Naive thymus-derived CD4-positive, alpha-beta T cell (primary cell): ENCODE measurements at regions of chr5 and their contacts with region 1.

Region 1: DNA sequence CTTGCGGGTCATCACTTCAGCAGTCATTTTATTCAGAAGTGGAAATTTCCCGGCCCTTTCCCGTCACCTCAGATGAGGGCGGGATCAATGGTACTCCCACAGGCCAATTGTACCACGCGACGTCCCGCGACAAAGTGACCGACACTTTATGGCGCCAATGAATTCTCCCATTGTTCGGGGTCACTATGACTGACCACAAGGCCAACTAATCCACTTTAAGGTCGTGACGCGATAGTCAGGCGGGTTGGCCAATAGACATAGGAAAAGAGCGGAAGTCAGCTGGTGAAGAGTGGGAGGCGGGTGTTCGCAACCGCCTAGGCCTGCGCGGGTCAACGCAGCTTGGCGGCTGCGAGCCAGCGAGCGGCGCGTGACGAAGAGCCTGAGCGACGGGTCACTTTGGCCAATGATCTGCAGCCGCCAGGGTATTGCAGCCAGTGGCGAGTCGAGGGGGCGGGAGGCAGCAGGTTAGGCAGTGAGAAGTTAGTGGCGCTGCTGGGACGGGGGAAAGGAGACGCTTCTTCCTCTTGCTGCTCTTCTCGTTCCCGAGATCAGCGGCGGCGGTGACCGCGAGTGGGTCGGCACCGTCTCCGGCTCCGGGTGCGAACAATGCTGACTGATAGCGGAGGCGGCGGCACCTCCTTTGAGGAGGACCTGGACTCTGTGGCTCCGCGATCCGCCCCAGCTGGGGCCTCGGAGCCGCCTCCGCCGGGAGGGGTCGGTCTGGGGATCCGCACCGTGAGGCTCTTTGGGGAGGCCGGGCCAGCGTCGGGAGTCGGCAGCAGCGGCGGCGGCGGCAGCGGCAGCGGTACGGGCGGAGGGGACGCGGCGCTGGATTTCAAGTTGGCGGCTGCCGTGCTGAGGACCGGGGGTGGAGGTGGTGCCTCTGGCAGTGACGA is at the start of gene ANKHD1:
- DNase-seq: peak; percentile 89 to 99 (median 98)
- ATAC-seq: peak; percentile 88
- H3K4me3 ChIP-seq: peak within 1 kb of the TSS; percentile 87
- H3K4me3 Mint-ChIP-seq: peak within 1 kb of the TSS in 1 of 10 donors; percentile 86
- H3K27ac ChIP-seq: peak within 1 kb of the TSS; percentile 90
- H3K27ac Mint-ChIP-seq: peak within 1 kb of the TSS in 2 of 9 donors; percentile 90 to 91
- H3K4me1 ChIP-seq: peaks cover 11 to 30% of the 10 kb centered on the region in 2 donors
- H3K4me1 Mint-ChIP-seq: peaks cover 23 to 45% (median 38%) of the 10 kb centered on the region in 7 donors
- H3K27me3 ChIP-seq: no peaks in the 10 kb centered on the region
- H3K27me3 Mint-ChIP-seq: no peaks in the 10 kb centered on the region
- total RNA-seq, gene ANKHD1: 145 to 240 (median 217) TPM

Region 2: GRCh38 chr5:138542956-138543729 is 1858.5 kb before region 1 on chr5 and contains the start of gene ETF1:
- CTCF ChIA-PET with region 1: no interaction called
- POLR2A ChIA-PET with region 1: no interaction called
- intact Hi-C with region 1: loop called (anchors 1 to 10 kb)
- DNase-seq: peak; percentile 95 to 100 (median 100)
- ATAC-seq: peak; percentile 95
- H3K4me3 ChIP-seq: peak within 1 kb of the TSS; percentile 87
- H3K4me3 Mint-ChIP-seq: peak within 1 kb of the TSS; percentile 94 to 100 (median 99)
- H3K27ac ChIP-seq: peak within 1 kb of the TSS; percentile 94
- H3K27ac Mint-ChIP-seq: peak within 1 kb of the TSS; percentile 97 to 100 (median 100)
- H3K4me1 ChIP-seq: peaks cover 36 to 41% of the 10 kb centered on the region in 2 donors
- H3K4me1 Mint-ChIP-seq: peaks cover 55 to 91% (median 73%) of the 10 kb centered on the region in 7 donors
- H3K27me3 ChIP-seq: no peaks in the 10 kb centered on the region
- H3K27me3 Mint-ChIP-seq: no peaks in the 10 kb centered on the region
- total RNA-seq, gene ETF1: 40.6 to 137 (median 84.1) TPM

Region 3: GRCh38 chr5:140107312-140108083 is 294.1 kb before region 1 on chr5:
- CTCF ChIA-PET with region 1: no interaction called
- POLR2A ChIA-PET with region 1: no interaction called
- intact Hi-C with region 1: loop called (anchors 1 kb)
- DNase-seq: peak; percentile 87 to 96 (median 94)
- ATAC-seq: peak; percentile 92
- H3K4me3 ChIP-seq: peak overlapping the region; percentile 80
- H3K4me3 Mint-ChIP-seq: peak overlapping the region; percentile 93 to 99 (median 97)
- H3K27ac ChIP-seq: peak overlapping the region; percentile 91
- H3K27ac Mint-ChIP-seq: peak overlapping the region; percentile 96 to 99 (median 99)
- H3K4me1 ChIP-seq: peaks cover 19 to 35% of the 10 kb centered on the region in 2 donors
- H3K4me1 Mint-ChIP-seq: peaks cover 30 to 59% (median 47%) of the 10 kb centered on the region in 7 donors
- H3K27me3 ChIP-seq: peaks cover 0 to 7% of the 10 kb centered on the region in 2 donors
- H3K27me3 Mint-ChIP-seq: peaks cover 0 to 77% (median 4%) of the 10 kb centered on the region in 5 donors

Region 4: DNA sequence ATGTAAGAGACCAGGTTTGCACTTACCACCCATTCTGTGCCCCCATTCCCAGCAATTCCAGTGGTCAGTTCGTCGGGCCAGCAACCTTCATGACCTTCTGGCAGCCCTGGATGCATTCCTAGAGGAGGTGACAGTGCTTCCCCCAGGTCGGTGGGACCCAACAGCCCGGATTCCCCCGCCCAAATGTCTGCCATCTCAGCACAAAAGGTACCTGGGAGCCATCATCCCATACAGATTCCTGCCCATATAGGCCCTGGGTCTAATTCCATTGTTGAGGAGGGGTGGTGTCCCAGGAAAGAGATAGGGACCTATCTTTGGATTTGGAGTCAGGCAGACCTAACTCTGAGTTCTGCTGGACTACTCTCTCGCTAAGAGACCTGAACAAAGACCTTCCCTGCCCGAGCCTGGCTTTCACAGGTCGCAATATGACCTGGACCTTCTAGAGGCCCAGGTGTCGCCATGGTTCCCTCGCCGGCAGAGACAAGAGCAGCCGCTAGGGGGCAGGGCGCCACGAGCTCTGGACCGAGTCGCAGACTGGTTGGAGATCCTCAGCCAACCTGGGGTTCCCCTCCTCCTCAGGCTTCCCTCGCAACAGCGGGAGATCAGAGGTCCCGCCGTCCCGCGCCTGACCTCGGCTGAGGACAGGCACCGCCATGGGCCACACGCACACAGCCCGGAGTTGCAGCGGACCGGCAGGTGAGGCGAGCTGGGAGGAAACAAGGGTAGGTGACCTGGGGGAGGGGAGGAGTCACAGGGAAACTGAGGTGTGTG is 38.6 kb before region 1 on chr5:
- CTCF ChIA-PET with region 1: no interaction called
- POLR2A ChIA-PET with region 1: no interaction called
- intact Hi-C with region 1: loop called in 1 of 2 experiments (anchors 1 kb)
- DNase-seq: peak; percentile 59 to 90 (median 77)
- ATAC-seq: peak; percentile 95
- H3K4me3 ChIP-seq: peak overlapping the region; percentile 57
- H3K4me3 Mint-ChIP-seq: peak overlapping the region; percentile 54 to 83 (median 73)
- H3K27ac ChIP-seq: no peak overlapping the region
- H3K27ac Mint-ChIP-seq: no peak overlapping the region
- H3K4me1 ChIP-seq: peaks cover 0 to 4% of the 10 kb centered on the region in 2 donors
- H3K4me1 Mint-ChIP-seq: peaks cover 0 to 5% (median 4%) of the 10 kb centered on the region in 7 donors
- H3K27me3 ChIP-seq: no peaks in the 10 kb centered on the region
- H3K27me3 Mint-ChIP-seq: peaks cover 0 to 5% (median 0%) of the 10 kb centered on the region in 5 donors

Region 5: DNA sequence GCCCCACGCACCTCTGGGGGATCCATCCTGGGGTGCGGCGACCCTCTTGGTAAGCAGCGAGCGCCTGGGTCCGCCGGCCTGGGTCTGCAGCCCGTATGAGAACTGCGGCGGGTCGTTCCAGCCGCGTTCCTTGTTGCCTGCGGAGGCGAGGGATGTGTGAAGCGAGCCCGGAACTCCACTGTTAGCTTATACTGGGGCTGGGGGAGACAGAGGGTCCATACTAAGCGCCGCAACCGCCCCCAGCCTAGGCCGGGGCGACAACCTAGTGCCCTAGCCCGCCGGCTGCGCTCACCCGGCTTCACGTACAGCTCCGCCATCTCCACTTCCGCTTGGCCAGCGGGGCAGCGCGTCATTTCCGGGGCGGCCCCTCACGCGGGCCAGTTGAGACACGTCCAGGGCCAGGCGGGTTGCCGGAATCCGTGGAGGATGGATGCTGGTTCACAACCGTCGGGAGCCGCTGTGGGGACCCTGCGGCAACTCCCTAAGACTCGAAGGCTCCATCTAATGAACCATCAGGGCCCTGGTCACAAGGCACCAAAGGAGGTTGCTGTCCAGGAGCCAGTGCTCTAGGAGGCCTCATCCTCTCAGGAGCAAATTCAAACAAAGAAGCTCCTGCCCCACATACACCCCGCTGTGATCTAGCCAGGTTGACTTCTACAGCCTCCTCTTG is 155.7 kb after region 1 on chr5 and contains the start of gene SRA1:
- CTCF ChIA-PET with region 1: no interaction called
- POLR2A ChIA-PET with region 1: interaction called, 5 read pairs
- intact Hi-C with region 1: loop called (anchors 2 kb)
- DNase-seq: peak; percentile 62 to 91 (median 72)
- ATAC-seq: peak; percentile 94
- H3K4me3 ChIP-seq: peak within 1 kb of the TSS; percentile 73
- H3K4me3 Mint-ChIP-seq: peak within 1 kb of the TSS; percentile 84 to 93 (median 92)
- H3K27ac ChIP-seq: peak within 1 kb of the TSS; percentile 97
- H3K27ac Mint-ChIP-seq: peak within 1 kb of the TSS; percentile 85 to 97 (median 95)
- H3K4me1 ChIP-seq: peaks cover 14 to 20% of the 10 kb centered on the region in 2 donors
- H3K4me1 Mint-ChIP-seq: peaks cover 45 to 63% (median 50%) of the 10 kb centered on the region in 7 donors
- H3K27me3 ChIP-seq: no peaks in the 10 kb centered on the region
- H3K27me3 Mint-ChIP-seq: no peaks in the 10 kb centered on the region
- total RNA-seq, gene SRA1: 23.8 to 45.5 (median 34.0) TPM

Region 6: DNA sequence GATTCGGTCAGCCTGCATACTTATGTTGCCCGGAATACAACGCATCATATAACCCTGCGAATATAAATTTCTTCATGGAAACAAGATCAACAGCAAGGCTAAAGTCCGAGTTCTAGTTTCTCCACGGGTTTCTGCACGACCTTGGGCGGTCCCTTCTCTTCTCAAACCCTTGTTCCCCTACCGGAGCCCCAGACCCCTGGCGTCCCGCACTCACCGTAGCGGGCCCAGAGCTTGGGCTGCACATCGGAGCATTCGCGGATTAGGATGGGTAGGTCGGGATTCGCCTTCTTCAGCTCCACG is 245.4 kb after region 1 on chr5:
- CTCF ChIA-PET with region 1: no interaction called
- POLR2A ChIA-PET with region 1: interaction called, 24 read pairs
- intact Hi-C with region 1: loop called (anchors 1 kb)
- DNase-seq: no peak
- ATAC-seq: no peak
- H3K4me3 ChIP-seq: peak overlapping the region; percentile 80
- H3K4me3 Mint-ChIP-seq: peak overlapping the region; percentile 88 to 100 (median 98)
- H3K27ac ChIP-seq: peak overlapping the region; percentile 95
- H3K27ac Mint-ChIP-seq: peak overlapping the region; percentile 93 to 100 (median 99)
- H3K4me1 ChIP-seq: peaks cover 18% of the 10 kb centered on the region in 2 donors
- H3K4me1 Mint-ChIP-seq: peaks cover 32 to 72% (median 61%) of the 10 kb centered on the region in 7 donors
- H3K27me3 ChIP-seq: no peaks in the 10 kb centered on the region
- H3K27me3 Mint-ChIP-seq: no peaks in the 10 kb centered on the region

Region 7: GRCh38 chr5:140710899-140711552 is 309.4 kb after region 1 on chr5:
- CTCF ChIA-PET with region 1: interaction called, 3 read pairs
- POLR2A ChIA-PET with region 1: interaction called, 22 read pairs
- intact Hi-C with region 1: loop called (anchors 1 kb)
- DNase-seq: peak; percentile 57 to 94 (median 87)
- ATAC-seq: peak; percentile 89
- H3K4me3 ChIP-seq: peak overlapping the region; percentile 96
- H3K4me3 Mint-ChIP-seq: peak overlapping the region; percentile 95 to 100 (median 99)
- H3K27ac ChIP-seq: peak overlapping the region; percentile 72
- H3K27ac Mint-ChIP-seq: peak overlapping the region; percentile 98 to 100 (median 99)
- H3K4me1 ChIP-seq: peaks cover 0 to 5% of the 10 kb centered on the region in 2 donors
- H3K4me1 Mint-ChIP-seq: peaks cover 6 to 35% (median 25%) of the 10 kb centered on the region in 7 donors
- H3K27me3 ChIP-seq: no peaks in the 10 kb centered on the region
- H3K27me3 Mint-ChIP-seq: peaks cover 0 to 11% (median 0%) of the 10 kb centered on the region in 5 donors

Region 8: GRCh38 chr5:140753561-140753960 is 352.0 kb after region 1 on chr5:
- CTCF ChIA-PET with region 1: no interaction called
- POLR2A ChIA-PET with region 1: no interaction called
- intact Hi-C with region 1: no loop called
- DNase-seq: no peak
- ATAC-seq: no peak
- H3K4me3 ChIP-seq: no peak overlapping the region
- H3K4me3 Mint-ChIP-seq: no peak overlapping the region
- H3K27ac ChIP-seq: no peak overlapping the region
- H3K27ac Mint-ChIP-seq: no peak overlapping the region
- H3K4me1 ChIP-seq: no peaks in the 10 kb centered on the region
- H3K4me1 Mint-ChIP-seq: peaks cover 0 to 2% (median 0%) of the 10 kb centered on the region in 7 donors
- H3K27me3 ChIP-seq: no peaks in the 10 kb centered on the region
- H3K27me3 Mint-ChIP-seq: peaks cover 0 to 44% (median 17%) of the 10 kb centered on the region in 5 donors